CD8-positive, alpha-beta memory T cell (primary cell): ENCODE measurements at regions of chr19 and their contacts with region 1.

Region 1: GRCh38 chr19:16111160-16111908 is at the start of gene RAB8A:
- DNase-seq: peak; percentile 97 to 99 (median 99)
- H3K4me3 ChIP-seq: peak within 1 kb of the TSS; percentile 89
- H3K4me3 Mint-ChIP-seq: peak within 1 kb of the TSS; percentile 92 to 100 (median 98)
- H3K27ac ChIP-seq: peak within 1 kb of the TSS; percentile 94
- H3K27ac Mint-ChIP-seq: peak within 1 kb of the TSS; percentile 93 to 99 (median 98)
- H3K4me1 ChIP-seq: peaks cover 36% of the 10 kb centered on the region
- H3K4me1 Mint-ChIP-seq: peaks cover 36 to 48% (median 40%) of the 10 kb centered on the region in 3 donors
- H3K27me3 ChIP-seq: no peaks in the 10 kb centered on the region
- H3K27me3 Mint-ChIP-seq: peaks cover 0 to 2% of the 10 kb centered on the region in 2 donors
- total RNA-seq, gene RAB8A: 268 to 298 TPM

Region 2: GRCh38 chr19:16051254-16052025 is 59.9 kb before region 1 on chr19:
- CTCF ChIA-PET with region 1: interaction called, 11 read pairs
- POLR2A ChIA-PET with region 1: no interaction called
- DNase-seq: peak in 4 of 5 donors; percentile 42 to 69 (median 63)
- H3K4me3 ChIP-seq: no peak overlapping the region
- H3K4me3 Mint-ChIP-seq: no peak overlapping the region
- H3K27ac ChIP-seq: no peak overlapping the region
- H3K27ac Mint-ChIP-seq: peak overlapping the region in 6 of 8 donors; percentile 23 to 88 (median 62)
- H3K4me1 ChIP-seq: no peaks in the 10 kb centered on the region
- H3K4me1 Mint-ChIP-seq: peaks cover 7 to 8% (median 8%) of the 10 kb centered on the region in 3 donors
- H3K27me3 ChIP-seq: no peaks in the 10 kb centered on the region
- H3K27me3 Mint-ChIP-seq: no peaks in the 10 kb centered on the region

Region 3: DNA sequence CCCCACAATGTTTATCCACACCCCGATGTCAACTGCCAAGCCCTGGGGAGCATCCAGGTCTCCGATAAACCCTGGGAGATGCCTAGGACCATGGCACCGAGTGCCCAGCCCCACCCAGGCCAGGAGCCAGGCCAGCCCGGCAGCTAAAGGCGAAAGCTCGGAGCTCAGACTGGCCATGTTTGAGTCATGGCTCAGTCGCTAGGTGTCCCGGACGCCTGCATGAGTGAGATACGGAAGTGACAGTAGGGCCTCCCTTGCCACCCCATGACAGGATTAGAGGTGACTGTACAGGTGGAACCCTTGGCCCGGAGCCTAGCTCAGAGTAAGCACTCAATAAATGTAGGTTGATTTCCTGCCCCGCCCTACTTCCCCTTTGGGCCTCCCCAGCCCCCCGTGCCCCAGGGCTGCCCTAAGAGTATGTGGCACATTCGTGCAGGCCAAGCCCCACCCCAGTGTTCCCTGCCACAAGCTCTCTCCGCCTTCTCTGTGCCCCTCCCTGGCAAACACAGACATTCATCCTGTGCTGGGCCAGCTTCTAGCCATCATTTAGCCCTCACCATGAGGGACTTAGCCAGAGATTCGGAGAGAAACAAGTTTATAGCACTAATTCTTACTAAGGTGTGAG is 40.9 kb before region 1 on chr19:
- CTCF ChIA-PET with region 1: interaction called, 37 read pairs
- POLR2A ChIA-PET with region 1: interaction called, 8 read pairs
- DNase-seq: peak; percentile 76 to 95 (median 88)
- H3K4me3 ChIP-seq: peak overlapping the region; percentile 60
- H3K4me3 Mint-ChIP-seq: peak overlapping the region in 4 of 7 donors; percentile 45 to 74 (median 70)
- H3K27ac ChIP-seq: peak overlapping the region; percentile 86
- H3K27ac Mint-ChIP-seq: no peak overlapping the region
- H3K4me1 ChIP-seq: peaks cover 67% of the 10 kb centered on the region
- H3K4me1 Mint-ChIP-seq: peaks cover 22 to 38% (median 29%) of the 10 kb centered on the region in 3 donors
- H3K27me3 ChIP-seq: no peaks in the 10 kb centered on the region
- H3K27me3 Mint-ChIP-seq: peaks cover 0 to 1% of the 10 kb centered on the region in 2 donors

Region 4: GRCh38 chr19:16088351-16089009 is 22.9 kb before region 1 on chr19:
- CTCF ChIA-PET with region 1: interaction called, 26 read pairs
- POLR2A ChIA-PET with region 1: interaction called, 8 read pairs
- DNase-seq: no peak
- H3K4me3 ChIP-seq: no peak overlapping the region
- H3K4me3 Mint-ChIP-seq: peak overlapping the region in 1 of 7 donors; percentile 38
- H3K27ac ChIP-seq: no peak overlapping the region
- H3K27ac Mint-ChIP-seq: peak overlapping the region in 3 of 8 donors; percentile 41 to 80 (median 72)
- H3K4me1 ChIP-seq: peaks cover 30% of the 10 kb centered on the region
- H3K4me1 Mint-ChIP-seq: peaks cover 32 to 36% (median 35%) of the 10 kb centered on the region in 3 donors
- H3K27me3 ChIP-seq: no peaks in the 10 kb centered on the region
- H3K27me3 Mint-ChIP-seq: no peaks in the 10 kb centered on the region

Region 5: DNA sequence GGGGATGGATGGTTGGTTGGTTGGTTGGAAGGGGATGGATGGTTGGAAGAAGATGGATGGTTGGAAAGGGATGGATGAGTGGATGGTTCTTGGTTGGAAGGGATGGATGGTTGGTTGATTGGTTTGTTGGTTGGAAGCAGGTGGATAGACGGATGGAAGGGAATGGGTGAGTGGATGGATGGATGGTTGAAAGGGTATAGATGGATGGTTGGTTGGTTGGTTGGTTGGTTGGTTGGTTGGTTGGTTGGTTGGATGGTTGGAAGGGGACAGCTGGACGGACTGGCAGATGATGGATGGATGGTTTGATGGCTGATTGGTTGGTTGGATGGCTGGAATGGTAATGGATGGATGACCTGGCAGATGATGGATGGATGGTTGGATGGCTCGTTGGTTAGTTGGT is 20.3 kb after region 1 on chr19:
- CTCF ChIA-PET with region 1: no interaction called
- POLR2A ChIA-PET with region 1: no interaction called
- DNase-seq: no peak
- H3K4me3 ChIP-seq: no peak overlapping the region
- H3K4me3 Mint-ChIP-seq: no peak overlapping the region
- H3K27ac ChIP-seq: no peak overlapping the region
- H3K27ac Mint-ChIP-seq: peak overlapping the region in 3 of 8 donors; percentile 1 to 73 (median 5)
- H3K4me1 ChIP-seq: peaks cover 2% of the 10 kb centered on the region
- H3K4me1 Mint-ChIP-seq: peaks cover 2 to 12% (median 10%) of the 10 kb centered on the region in 3 donors
- H3K27me3 ChIP-seq: no peaks in the 10 kb centered on the region
- H3K27me3 Mint-ChIP-seq: no peaks in the 10 kb centered on the region

Region 6: GRCh38 chr19:16324384-16325160 is 213.2 kb after region 1 on chr19 and contains the start of gene KLF2:
- CTCF ChIA-PET with region 1: no interaction called
- POLR2A ChIA-PET with region 1: no interaction called
- DNase-seq: peak; percentile 93 to 98 (median 95)
- H3K4me3 ChIP-seq: peak within 1 kb of the TSS; percentile 100
- H3K4me3 Mint-ChIP-seq: peak within 1 kb of the TSS; percentile 78 to 100 (median 81)
- H3K27ac ChIP-seq: peak within 1 kb of the TSS; percentile 100
- H3K27ac Mint-ChIP-seq: peak within 1 kb of the TSS; percentile 91 to 99 (median 97)
- H3K4me1 ChIP-seq: peaks cover 37% of the 10 kb centered on the region
- H3K4me1 Mint-ChIP-seq: peaks cover 29 to 55% (median 38%) of the 10 kb centered on the region in 3 donors
- H3K27me3 ChIP-seq: no peaks in the 10 kb centered on the region
- H3K27me3 Mint-ChIP-seq: peaks cover 0 to 37% of the 10 kb centered on the region in 2 donors
- total RNA-seq, gene KLF2: 33.7 to 37.5 TPM